Adrenal gland (tissue), 19 donors: ENCODE measurements at regions of chr1 and their contacts with region 1.

Region 1: GRCh38 chr1:22983934-22984333 is 11.3 kb upstream of the LACTBL1 start:
- DNase-seq: no peak
- H3K4me3 ChIP-seq: no peak overlapping the region
- H3K27ac ChIP-seq: no peak overlapping the region
- H3K4me1 ChIP-seq: peaks cover 0 to 4% of the 10 kb centered on the region in 2 donors
- H3K27me3 ChIP-seq: no peaks in the 10 kb centered on the region
- CTCF ChIP-seq: no peak
- POLR2A ChIP-seq: no peak

Region 2: GRCh38 chr1:22689505-22689904 is 294.4 kb before region 1 on chr1:
- intact Hi-C with region 1: no loop called
- DNase-seq: no peak
- H3K4me3 ChIP-seq: no peak overlapping the region
- H3K27ac ChIP-seq: no peak overlapping the region
- H3K4me1 ChIP-seq: no peaks in the 10 kb centered on the region
- H3K27me3 ChIP-seq: no peaks in the 10 kb centered on the region
- CTCF ChIP-seq: no peak
- POLR2A ChIP-seq: no peak

Region 3: GRCh38 chr1:23084880-23085279 is 100.9 kb after region 1 on chr1:
- intact Hi-C with region 1: loop called in 1 of 2 experiments (anchors 5 kb)
- DNase-seq: no peak
- H3K4me3 ChIP-seq: no peak overlapping the region
- H3K27ac ChIP-seq: no peak overlapping the region
- H3K4me1 ChIP-seq: peaks cover 0 to 5% of the 10 kb centered on the region in 2 donors
- H3K27me3 ChIP-seq: no peaks in the 10 kb centered on the region
- CTCF ChIP-seq: no peak
- POLR2A ChIP-seq: no peak

Region 4: DNA sequence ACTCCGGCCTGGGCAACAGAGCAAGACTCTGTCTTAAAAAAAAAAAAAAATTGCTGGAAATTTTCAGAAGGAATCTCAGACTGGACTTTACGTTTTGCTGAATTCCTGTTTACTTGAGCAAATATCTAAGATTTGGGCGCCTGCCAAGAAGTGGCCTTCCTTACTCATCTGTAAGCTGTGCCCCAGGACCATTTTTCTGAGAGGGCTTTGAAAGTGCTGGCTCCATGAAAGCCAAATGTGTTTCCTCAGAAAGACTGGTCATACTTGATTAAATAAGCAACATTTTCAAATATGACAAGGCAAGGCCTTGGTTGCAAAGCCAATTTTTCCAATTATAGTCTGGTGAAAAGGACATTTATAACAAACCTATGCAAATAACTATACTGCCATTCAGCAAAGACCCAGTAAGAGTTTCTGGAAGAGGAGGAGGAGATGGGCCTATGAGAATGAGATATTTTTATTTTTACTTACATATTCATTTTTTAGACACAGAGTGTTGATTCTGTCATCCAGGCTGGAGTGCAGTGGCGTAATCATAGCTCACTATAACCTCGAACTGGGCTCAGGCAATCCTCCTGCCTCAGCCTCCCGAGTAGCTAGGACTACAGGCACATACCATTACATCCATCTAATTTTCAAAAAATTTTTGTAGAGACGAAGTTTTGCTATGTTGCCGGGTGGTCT is 289.7 kb after region 1 on chr1:
- intact Hi-C with region 1: loop called in 1 of 2 experiments (anchors 10 kb)
- DNase-seq: peak; percentile 36 to 77 (median 65)
- H3K4me3 ChIP-seq: no peak overlapping the region
- H3K27ac ChIP-seq: no peak overlapping the region
- H3K4me1 ChIP-seq: peaks cover 4 to 7% of the 10 kb centered on the region in 2 donors
- H3K27me3 ChIP-seq: no peaks in the 10 kb centered on the region
- CTCF ChIP-seq: no peak
- POLR2A ChIP-seq: no peak